ENCODE measurements at regions of chr3 and their contacts with region 1.

Region 1: GRCh38 chr3:11271986-11272904 is at the start of gene ATG7:
- DNase-seq: peak; percentile 99
- H3K4me3 Mint-ChIP-seq: peak within 1 kb of the TSS; percentile 96
- H3K27ac Mint-ChIP-seq: peak within 1 kb of the TSS; percentile 94
- H3K4me1 Mint-ChIP-seq: peaks cover 43% of the 10 kb centered on the region
- H3K27me3 Mint-ChIP-seq: peaks cover 4% of the 10 kb centered on the region
- total RNA-seq, gene ATG7: 37.7 and 41.4 TPM in 2 replicates

Region 2: GRCh38 chr3:11288786-11289682 is 16.8 kb after region 1 on chr3:
- intact Hi-C with region 1: loop called (anchors 2 kb)
- DNase-seq: no peak
- H3K4me3 Mint-ChIP-seq: peak overlapping the region; percentile 51
- H3K27ac Mint-ChIP-seq: peak overlapping the region; percentile 90
- H3K4me1 Mint-ChIP-seq: peaks cover 44% of the 10 kb centered on the region
- H3K27me3 Mint-ChIP-seq: no peaks in the 10 kb centered on the region

Region 3: DNA sequence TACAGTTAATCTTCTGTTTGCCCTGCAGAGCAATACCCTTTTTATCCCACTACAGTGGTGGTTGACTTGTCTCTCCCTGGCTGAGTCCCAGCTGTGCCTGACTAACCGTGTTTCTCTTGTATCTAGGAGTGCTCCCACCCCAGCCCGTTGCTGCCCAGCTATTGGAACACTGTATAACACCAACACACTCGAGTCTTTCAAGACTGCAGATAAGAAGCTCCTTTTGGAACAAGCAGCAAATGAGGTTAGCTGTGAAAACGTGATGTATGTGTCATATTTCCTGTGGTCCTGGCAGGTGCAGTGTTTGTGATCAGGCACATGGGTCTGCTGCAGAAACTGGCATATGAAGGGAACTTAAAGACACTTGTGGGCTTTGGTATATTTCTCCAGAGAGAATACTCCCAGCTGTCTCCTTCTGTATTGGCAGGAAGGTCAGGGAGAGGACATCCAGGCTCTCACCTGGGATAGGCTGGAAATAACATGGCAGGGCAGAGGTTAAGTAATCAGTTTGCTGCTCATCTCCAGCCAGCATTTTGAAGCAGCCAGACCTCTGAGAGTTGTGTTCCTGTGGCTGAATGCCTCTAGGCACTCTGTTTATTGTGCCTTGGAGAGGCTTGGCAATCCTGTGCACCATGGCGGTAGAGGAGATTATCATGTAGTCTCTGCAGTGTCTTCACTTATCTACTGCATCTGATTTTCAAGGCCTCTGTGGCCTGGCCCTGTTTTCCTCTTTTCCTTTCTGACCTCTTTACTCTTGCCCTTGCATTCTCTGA is 34.8 kb after region 1 on chr3:
- intact Hi-C with region 1: loop called (anchors 5 kb)
- DNase-seq: peak; percentile 77
- H3K4me3 Mint-ChIP-seq: peak overlapping the region; percentile 3
- H3K27ac Mint-ChIP-seq: no peak overlapping the region
- H3K4me1 Mint-ChIP-seq: peaks cover 26% of the 10 kb centered on the region
- H3K27me3 Mint-ChIP-seq: no peaks in the 10 kb centered on the region

Measured in activated CD4-positive, alpha-beta T cell treated with anti-CD3 and anti-CD28 coated beads, Interleukin-2, amount 10 ng/mL, durations not matched to agents 24 days and 14 days (primary cell).